Calu3 (cell line): ENCODE measurements at regions of chr14 and their contacts with region 1.

Region 1: DNA sequence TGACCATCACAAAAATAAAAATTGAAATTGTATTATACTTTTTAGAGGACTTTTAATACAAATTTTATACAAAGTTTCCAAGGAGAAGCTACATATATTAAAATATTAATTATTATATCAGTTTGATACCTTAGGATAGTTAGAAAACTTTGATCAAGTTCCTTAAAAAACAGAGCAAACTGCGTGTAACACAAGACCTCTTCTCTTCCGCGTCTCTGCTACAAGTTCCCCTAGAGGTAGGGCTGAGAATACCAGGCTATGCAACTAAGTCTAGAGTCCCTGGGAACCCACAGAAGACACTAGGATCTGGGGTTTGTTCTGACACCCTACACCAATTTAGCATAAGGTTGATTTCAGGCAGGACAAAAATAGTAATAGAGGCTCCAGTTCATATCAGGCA is 319.0 kb downstream of the FOXG1 start:
- DNase-seq: peak; percentile 12
- H3K4me3 Mint-ChIP-seq: no peak overlapping the region
- H3K27ac Mint-ChIP-seq: no peak overlapping the region
- H3K4me1 Mint-ChIP-seq: peaks cover 11% of the 10 kb centered on the region
- H3K27me3 Mint-ChIP-seq: no peaks in the 10 kb centered on the region
- CTCF ChIP-seq: no peak

Region 2: DNA sequence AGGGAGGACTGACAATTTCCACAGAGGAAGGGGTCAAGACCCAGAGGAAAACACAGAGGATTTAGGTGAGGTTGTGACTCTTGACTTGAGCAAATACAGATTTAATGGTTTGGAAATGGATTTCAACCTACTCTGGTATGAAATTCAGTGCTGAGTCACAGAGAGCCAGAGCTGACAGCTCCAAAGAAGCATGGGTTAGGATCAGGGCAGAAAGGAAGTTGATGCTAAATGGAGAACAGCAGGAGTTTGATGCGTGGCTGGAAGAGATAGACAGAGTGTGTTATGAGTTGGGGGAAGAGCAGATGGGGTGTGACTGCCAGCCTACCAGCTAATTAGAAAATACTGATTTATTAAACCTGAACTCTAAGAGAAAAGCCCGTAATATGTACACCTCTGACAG is 46.4 kb before region 1 on chr14:
- CTCF ChIA-PET with region 1: no interaction called
- intact Hi-C with region 1: loop called (anchors 10 kb)
- DNase-seq: no peak
- H3K4me3 Mint-ChIP-seq: no peak overlapping the region
- H3K27ac Mint-ChIP-seq: no peak overlapping the region
- H3K4me1 Mint-ChIP-seq: no peaks in the 10 kb centered on the region
- H3K27me3 Mint-ChIP-seq: no peaks in the 10 kb centered on the region
- CTCF ChIP-seq: no peak

Region 3: DNA sequence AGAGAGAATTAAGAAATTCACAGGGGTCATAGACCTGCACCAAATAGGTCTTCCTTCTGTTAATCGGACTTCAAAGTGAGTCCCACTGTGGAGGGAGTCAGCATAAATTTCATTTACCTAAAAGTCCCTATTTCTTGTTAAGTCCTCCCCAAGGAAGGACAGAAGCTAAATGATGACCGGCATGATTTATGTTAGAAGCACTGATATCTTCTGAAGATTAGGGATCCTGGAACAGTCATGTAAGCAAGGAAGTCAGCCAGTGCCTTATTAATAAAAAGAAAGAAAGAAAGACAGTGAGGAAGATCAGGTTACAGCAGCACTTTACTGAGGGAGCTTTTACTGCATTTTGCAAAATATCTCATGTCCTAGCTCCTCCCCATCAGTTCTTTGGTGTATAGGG is 31.4 kb before region 1 on chr14:
- CTCF ChIA-PET with region 1: no interaction called
- intact Hi-C with region 1: no loop called
- DNase-seq: no peak
- H3K4me3 Mint-ChIP-seq: no peak overlapping the region
- H3K27ac Mint-ChIP-seq: no peak overlapping the region
- H3K4me1 Mint-ChIP-seq: no peaks in the 10 kb centered on the region
- H3K27me3 Mint-ChIP-seq: no peaks in the 10 kb centered on the region
- CTCF ChIP-seq: no peak